Calu3 (cell line): ENCODE measurements at regions of chr17 and their contacts with region 1.

Region 1: GRCh38 chr17:50120475-50121253 is 9.3 kb downstream of the SAMD14 start:
- DNase-seq: no peak
- H3K4me3 Mint-ChIP-seq: no peak overlapping the region
- H3K27ac Mint-ChIP-seq: no peak overlapping the region
- H3K4me1 Mint-ChIP-seq: no peaks in the 10 kb centered on the region
- H3K27me3 Mint-ChIP-seq: peaks cover 86% of the 10 kb centered on the region
- CTCF ChIP-seq: no peak

Region 2: GRCh38 chr17:50132104-50132794 is 11.6 kb after region 1 on chr17:
- CTCF ChIA-PET with region 1: interaction called, 11 read pairs
- intact Hi-C with region 1: no loop called
- DNase-seq: no peak
- H3K4me3 Mint-ChIP-seq: no peak overlapping the region
- H3K27ac Mint-ChIP-seq: no peak overlapping the region
- H3K4me1 Mint-ChIP-seq: peaks cover 31% of the 10 kb centered on the region
- H3K27me3 Mint-ChIP-seq: peaks cover 47% of the 10 kb centered on the region
- CTCF ChIP-seq: no peak